Naive thymus-derived CD8-positive, alpha-beta T cell (primary cell): ENCODE measurements at regions of chr9 and their contacts with region 1.

Region 1: GRCh38 chr9:89529243-89530035 is 31.5 kb upstream of the SEMA4D start:
- DNase-seq: peak in 4 of 10 donors; percentile 32 to 65 (median 53)
- ATAC-seq: peak; percentile 84 to 89
- H3K4me3 Mint-ChIP-seq: peak overlapping the region; percentile 31 to 87 (median 64)
- H3K27ac Mint-ChIP-seq: peak overlapping the region; percentile 81 to 97 (median 95)
- H3K4me1 Mint-ChIP-seq: peaks cover 67 to 100% (median 99%) of the 10 kb centered on the region in 4 donors
- H3K27me3 Mint-ChIP-seq: no peaks in the 10 kb centered on the region

Region 2: GRCh38 chr9:89218040-89218928 is 311.2 kb before region 1 on chr9:
- POLR2A ChIA-PET with region 1: no interaction called
- DNase-seq: no peak
- ATAC-seq: no peak
- H3K4me3 Mint-ChIP-seq: no peak overlapping the region
- H3K27ac Mint-ChIP-seq: peak overlapping the region in 1 of 10 donors; percentile 42
- H3K4me1 Mint-ChIP-seq: no peaks in the 10 kb centered on the region
- H3K27me3 Mint-ChIP-seq: peaks cover 3 to 18% (median 9%) of the 10 kb centered on the region in 5 donors

Region 3: GRCh38 chr9:89489548-89490530 is 39.6 kb before region 1 on chr9:
- POLR2A ChIA-PET with region 1: interaction called, 10 read pairs
- DNase-seq: peak in 4 of 10 donors; percentile 60 to 82 (median 78)
- ATAC-seq: peak; percentile 65 to 90
- H3K4me3 Mint-ChIP-seq: peak overlapping the region; percentile 49 to 99 (median 86)
- H3K27ac Mint-ChIP-seq: peak overlapping the region; percentile 26 to 97 (median 94)
- H3K4me1 Mint-ChIP-seq: peaks cover 60 to 97% (median 95%) of the 10 kb centered on the region in 4 donors
- H3K27me3 Mint-ChIP-seq: no peaks in the 10 kb centered on the region

Region 4: GRCh38 chr9:89497978-89498851 is 31.2 kb before region 1 on chr9 and contains the start of gene SEMA4D:
- POLR2A ChIA-PET with region 1: interaction called, 63 read pairs
- DNase-seq: peak in 5 of 10 donors; percentile 21 to 56 (median 45)
- ATAC-seq: peak in 1 of 2 donors; percentile 5
- H3K4me3 Mint-ChIP-seq: peak within 1 kb of the TSS; percentile 79 to 99 (median 98)
- H3K27ac Mint-ChIP-seq: peak within 1 kb of the TSS; percentile 88 to 98 (median 96)
- H3K4me1 Mint-ChIP-seq: peaks cover 54 to 92% (median 89%) of the 10 kb centered on the region in 4 donors
- H3K27me3 Mint-ChIP-seq: no peaks in the 10 kb centered on the region
- polyA plus RNA-seq, gene SEMA4D: 154 to 359 (median 176) TPM

Region 5: GRCh38 chr9:89579741-89580385 is 50.4 kb after region 1 on chr9:
- POLR2A ChIA-PET with region 1: no interaction called
- DNase-seq: peak in 5 of 10 donors; percentile 24 to 69 (median 32)
- ATAC-seq: peak; percentile 71 to 92
- H3K4me3 Mint-ChIP-seq: peak overlapping the region in 7 of 10 donors; percentile 23 to 54 (median 40)
- H3K27ac Mint-ChIP-seq: peak overlapping the region in 4 of 10 donors; percentile 13 to 60 (median 22)
- H3K4me1 Mint-ChIP-seq: peaks cover 11 to 18% (median 15%) of the 10 kb centered on the region in 4 donors
- H3K27me3 Mint-ChIP-seq: peaks cover 14 to 45% (median 24%) of the 10 kb centered on the region in 5 donors

Region 6: GRCh38 chr9:89759572-89759971 is 230.1 kb after region 1 on chr9:
- POLR2A ChIA-PET with region 1: no interaction called
- DNase-seq: no peak
- ATAC-seq: no peak
- H3K4me3 Mint-ChIP-seq: no peak overlapping the region
- H3K27ac Mint-ChIP-seq: no peak overlapping the region
- H3K4me1 Mint-ChIP-seq: peaks cover 0 to 3% (median 1%) of the 10 kb centered on the region in 4 donors
- H3K27me3 Mint-ChIP-seq: peaks cover 0 to 9% (median 0%) of the 10 kb centered on the region in 5 donors